GM13977 (cell line): ENCODE measurements at regions of chr7 and their contacts with region 1.

Region 1: GRCh38 chr7:116809636-116810266 is 52.6 kb upstream of the CAPZA2 start:
- DNase-seq: peak; percentile 40
- CTCF ChIP-seq: peak; percentile 59

Region 2: GRCh38 chr7:116173051-116174028 is 636.4 kb before region 1 on chr7:
- in situ Hi-C with region 1: loop called (anchors 25 kb)
- DNase-seq: peak; percentile 29
- CTCF ChIP-seq: peak; percentile 52

Region 3: GRCh38 chr7:116258734-116259133 is 551.0 kb before region 1 on chr7:
- in situ Hi-C with region 1: loop called (anchors 25 kb)
- DNase-seq: peak; percentile 24
- CTCF ChIP-seq: peak; percentile 73

Region 4: GRCh38 chr7:116588641-116589594 is 220.8 kb before region 1 on chr7:
- in situ Hi-C with region 1: loop called (anchors 10 kb)
- DNase-seq: peak; percentile 9
- CTCF ChIP-seq: peak; percentile 61

Region 5: DNA sequence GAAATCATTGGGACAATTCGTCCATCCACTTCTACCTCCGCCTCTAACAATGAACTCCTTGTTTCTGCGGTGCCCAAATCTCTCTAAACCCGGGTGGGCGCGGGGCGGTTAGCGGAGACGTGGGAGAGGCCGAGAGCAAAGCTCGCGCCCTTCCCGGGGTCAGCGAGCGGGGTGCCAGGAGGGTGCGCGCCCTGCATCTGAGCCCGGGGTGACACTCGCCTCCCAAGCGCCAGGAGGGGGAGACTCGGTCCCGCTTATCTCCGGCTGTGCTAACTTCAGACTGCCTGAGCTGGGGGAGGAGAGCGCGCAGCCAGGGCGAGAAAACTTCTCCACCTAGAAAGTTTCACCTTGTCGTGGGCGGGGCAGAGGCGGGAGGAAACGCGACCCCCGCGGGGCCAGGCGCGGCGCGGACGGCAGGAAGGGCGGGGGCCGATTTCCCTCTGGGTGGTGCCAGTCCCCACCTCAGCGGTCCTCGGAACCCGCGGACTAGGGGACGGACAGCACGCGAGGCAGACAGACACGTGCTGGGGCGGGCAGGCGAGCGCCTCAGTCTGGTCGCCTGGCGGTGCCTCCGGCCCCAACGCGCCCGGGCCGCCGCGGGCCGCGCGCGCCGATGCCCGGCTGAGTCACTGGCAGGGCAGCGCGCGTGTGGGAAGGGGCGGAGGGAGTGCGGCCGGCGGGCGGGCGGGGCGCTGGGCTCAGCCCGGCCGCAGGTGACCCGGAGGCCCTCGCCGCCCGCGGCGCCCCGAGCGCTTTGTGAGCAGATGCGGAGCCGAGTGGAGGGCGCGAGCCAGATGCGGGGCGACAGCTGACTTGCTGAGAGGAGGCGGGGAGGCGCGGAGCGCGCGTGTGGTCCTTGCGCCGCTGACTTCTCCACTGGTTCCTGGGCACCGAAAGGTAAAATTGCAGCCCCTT is 137.8 kb before region 1 on chr7 and contains the start of gene MET:
- in situ Hi-C with region 1: loop called (anchors 10 kb)
- DNase-seq: peak; percentile 80
- CTCF ChIP-seq: peak; percentile 57

Region 6: GRCh38 chr7:117600911-117601310 is 791.2 kb after region 1 on chr7:
- in situ Hi-C with region 1: no loop called
- DNase-seq: no peak
- CTCF ChIP-seq: no peak